Activated naive CD4-positive, alpha-beta T cell treated with anti-CD3 and anti-CD28 coated beads for 36 hours (primary cell): ENCODE measurements at regions of chr1 and their contacts with region 1.

Region 1: GRCh38 chr1:174982971-174983689 is 16.6 kb upstream of the CACYBP start:
- DNase-seq: peak; percentile 56
- H3K4me3 Mint-ChIP-seq: no peak overlapping the region
- H3K27ac Mint-ChIP-seq: no peak overlapping the region
- H3K4me1 Mint-ChIP-seq: peaks cover 18% of the 10 kb centered on the region
- H3K27me3 Mint-ChIP-seq: no peaks in the 10 kb centered on the region

Region 2: DNA sequence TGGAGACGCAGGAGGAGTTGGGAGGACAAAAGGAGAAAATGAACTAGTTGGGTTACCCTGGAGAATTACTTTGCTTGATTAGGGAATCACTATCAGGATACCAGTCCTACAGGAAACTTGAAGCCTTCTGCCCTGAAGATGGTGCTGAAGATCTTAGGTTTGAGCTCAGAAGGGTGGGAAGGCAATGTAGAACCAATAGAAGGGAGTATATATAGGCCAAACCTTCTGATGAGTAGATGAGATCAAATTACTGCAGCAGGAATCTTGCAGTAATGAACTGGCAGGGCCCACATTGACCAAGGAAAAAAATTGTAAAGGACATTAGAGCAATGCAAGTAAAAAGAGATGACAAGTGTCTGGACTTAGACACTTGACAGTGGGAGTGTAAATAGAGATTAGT is 99.7 kb before region 1 on chr1:
- CTCF ChIA-PET with region 1: interaction called, 5 read pairs
- intact Hi-C with region 1: loop called (anchors 1 kb)
- DNase-seq: no peak
- H3K4me3 Mint-ChIP-seq: no peak overlapping the region
- H3K27ac Mint-ChIP-seq: no peak overlapping the region
- H3K4me1 Mint-ChIP-seq: no peaks in the 10 kb centered on the region
- H3K27me3 Mint-ChIP-seq: no peaks in the 10 kb centered on the region

Region 3: DNA sequence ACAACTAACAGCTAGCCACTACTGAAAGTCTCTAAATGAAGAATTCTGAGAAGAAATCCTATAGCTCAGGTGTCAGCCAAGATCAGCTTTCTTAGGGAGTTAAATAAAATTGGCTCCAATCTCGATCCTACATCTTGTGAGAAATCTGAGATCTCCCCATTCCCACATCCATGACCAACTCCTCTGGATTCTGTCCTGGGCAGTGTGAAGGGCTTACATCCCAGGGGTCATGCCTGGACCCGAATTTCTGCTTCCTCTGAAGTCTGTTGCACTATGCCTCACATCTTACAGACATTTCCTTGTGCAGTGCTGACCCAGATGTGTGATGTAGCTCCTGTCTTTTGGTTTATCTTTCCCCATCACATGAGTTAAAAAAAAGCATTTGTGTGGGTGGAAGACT is 79.7 kb after region 1 on chr1:
- CTCF ChIA-PET with region 1: no interaction called
- intact Hi-C with region 1: no loop called
- DNase-seq: no peak
- H3K4me3 Mint-ChIP-seq: no peak overlapping the region
- H3K27ac Mint-ChIP-seq: no peak overlapping the region
- H3K4me1 Mint-ChIP-seq: no peaks in the 10 kb centered on the region
- H3K27me3 Mint-ChIP-seq: no peaks in the 10 kb centered on the region